Heart left ventricle (tissue), 16 donors: ENCODE measurements at regions of chr10 and their contacts with region 1.

Region 1: DNA sequence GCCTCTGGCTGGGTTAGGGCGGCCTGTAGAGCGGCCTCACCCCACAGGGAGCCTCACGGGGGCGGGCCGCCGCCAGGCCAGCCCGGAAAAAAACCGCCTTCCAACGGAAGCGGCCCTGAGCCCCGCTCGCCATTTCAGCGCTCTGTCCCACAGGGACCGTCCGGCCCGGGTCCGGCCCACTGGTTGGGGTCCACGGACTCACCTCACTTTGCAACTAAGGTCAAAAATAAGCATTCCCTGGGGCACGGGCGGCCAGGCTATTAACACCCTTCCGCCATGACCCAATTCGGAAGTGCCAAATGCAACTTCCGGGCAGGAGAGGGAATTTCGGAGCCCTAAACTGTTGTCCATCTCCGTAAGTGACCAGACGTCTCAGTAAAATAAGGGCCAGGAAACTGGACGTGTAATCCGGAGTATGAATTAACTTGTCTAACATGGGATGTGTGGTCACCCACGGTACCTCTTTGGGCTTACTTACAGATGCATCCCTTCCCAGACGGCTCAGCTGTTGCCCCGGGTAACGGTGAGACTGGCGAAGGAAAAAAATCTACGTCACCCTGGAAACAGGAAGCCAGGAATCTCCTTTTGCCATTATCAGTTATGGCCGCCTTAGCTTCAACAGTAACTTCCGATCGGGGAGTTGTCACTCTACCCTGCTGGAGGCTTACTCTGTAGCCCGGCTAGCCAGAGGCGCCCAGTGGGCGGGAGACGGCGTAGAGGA is at the start of gene BBIP1:
- DNase-seq: no peak
- ATAC-seq: peak; percentile 96 to 97 (median 97)
- H3K4me3 ChIP-seq: peak within 1 kb of the TSS; percentile 62 to 90 (median 76)
- H3K27ac ChIP-seq: peak within 1 kb of the TSS; percentile 94 to 100 (median 99)
- H3K4me1 ChIP-seq: peaks cover 2 to 47% (median 39%) of the 10 kb centered on the region in 12 donors
- H3K27me3 ChIP-seq: no peaks in the 10 kb centered on the region
- CTCF ChIP-seq: peak in 4 of 12 donors; percentile 8 to 36 (median 16)
- POLR2A ChIP-seq: peak in 1 of 2 donors; percentile 66
- total RNA-seq, gene BBIP1: 19.3 to 32.4 (median 25.2) TPM

Region 2: DNA sequence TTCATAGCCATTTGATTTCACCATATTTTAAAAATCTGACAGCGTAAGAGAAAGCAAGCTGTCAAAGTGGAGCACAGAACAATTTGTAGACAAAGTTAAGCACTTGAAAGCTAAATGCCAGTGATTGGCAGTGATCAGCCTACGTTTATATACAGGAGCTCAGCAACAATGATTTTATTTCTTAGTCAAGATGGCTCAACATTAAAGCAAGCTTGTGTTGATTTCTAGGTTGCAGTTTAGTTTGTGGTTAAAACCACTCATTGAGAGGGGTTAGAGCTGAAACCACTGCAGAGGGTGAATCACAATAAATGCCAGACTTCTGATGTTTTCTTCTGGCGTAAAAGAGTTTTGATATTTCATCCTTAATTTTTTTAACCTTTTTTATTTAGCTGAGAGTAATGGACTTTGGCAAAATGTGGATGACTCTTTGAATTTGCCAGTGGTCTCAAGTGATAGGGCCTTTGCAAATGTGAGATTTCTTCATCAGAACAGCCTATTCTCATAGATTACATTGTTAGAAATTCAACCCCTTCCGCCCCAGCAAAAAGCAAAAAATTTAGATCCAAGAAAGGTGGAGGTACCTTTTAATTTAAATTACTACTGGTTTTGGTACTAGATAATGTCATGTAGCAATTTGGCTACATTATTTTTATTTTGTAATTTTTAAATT is 74.4 kb after region 1 on chr10:
- intact Hi-C with region 1: loop called in 3 of 10 experiments (anchors 10 kb)
- DNase-seq: no peak
- ATAC-seq: no peak
- H3K4me3 ChIP-seq: no peak overlapping the region
- H3K27ac ChIP-seq: no peak overlapping the region
- H3K4me1 ChIP-seq: peaks cover 0 to 23% (median 0%) of the 10 kb centered on the region in 12 donors
- H3K27me3 ChIP-seq: no peaks in the 10 kb centered on the region
- CTCF ChIP-seq: no peak
- POLR2A ChIP-seq: no peak

Region 3: DNA sequence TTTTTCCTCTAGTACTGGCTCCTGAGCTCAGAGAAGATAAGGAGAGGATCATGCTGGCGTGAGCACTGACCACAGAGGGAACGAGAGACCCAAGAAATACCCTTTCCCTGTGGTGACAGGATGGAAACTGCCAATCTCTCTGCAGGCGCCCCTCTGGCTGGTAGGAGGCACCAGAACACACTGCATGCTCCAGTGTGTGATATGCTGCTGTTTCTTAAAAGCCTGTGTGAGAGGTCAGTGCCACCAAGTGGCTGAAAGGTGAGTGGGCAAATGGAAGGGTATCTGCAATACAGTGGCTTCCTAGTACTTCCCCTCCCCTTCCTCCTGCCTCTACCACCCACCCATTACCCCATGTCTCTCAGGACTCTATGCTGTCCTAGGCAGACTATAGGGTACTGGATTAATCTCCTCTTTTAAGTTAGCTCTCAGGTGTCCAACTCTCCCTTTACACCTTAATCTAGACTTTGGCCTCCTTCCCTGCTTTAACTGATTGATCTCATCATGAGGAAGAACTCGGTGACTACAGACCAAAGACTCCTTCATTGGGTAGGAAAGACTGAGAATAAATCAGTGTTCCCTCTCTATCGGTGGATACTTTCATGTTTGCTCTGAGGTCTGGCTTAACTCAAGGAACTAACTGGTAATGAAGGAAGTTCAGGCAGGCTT is 441.6 kb after region 1 on chr10:
- intact Hi-C with region 1: loop called in 1 of 10 experiments (anchors 5 kb)
- DNase-seq: peak in 3 of 5 donors; percentile 6 to 32 (median 21)
- ATAC-seq: peak; percentile 73 to 91 (median 88)
- H3K4me3 ChIP-seq: no peak overlapping the region
- H3K27ac ChIP-seq: no peak overlapping the region
- H3K4me1 ChIP-seq: no peaks in the 10 kb centered on the region
- H3K27me3 ChIP-seq: peaks cover 0 to 5% (median 0%) of the 10 kb centered on the region in 9 donors
- CTCF ChIP-seq: peak in 11 of 12 donors; percentile 29 to 62 (median 45)
- POLR2A ChIP-seq: no peak